Endothelial cell of umbilical vein (primary cell): ENCODE measurements at regions of chr17 and their contacts with region 1.

Region 1: GRCh38 chr17:51707205-51707604 is 446.9 kb downstream of the UTP18 start:
- DNase-seq: no peak
- H3K4me3 ChIP-seq: no peak overlapping the region
- H3K27ac ChIP-seq: no peak overlapping the region
- H3K4me1 ChIP-seq: no peaks in the 10 kb centered on the region
- H3K27me3 ChIP-seq: no peaks in the 10 kb centered on the region
- CTCF ChIP-seq: no peak
- POLR2A ChIP-seq: no peak

Region 2: DNA sequence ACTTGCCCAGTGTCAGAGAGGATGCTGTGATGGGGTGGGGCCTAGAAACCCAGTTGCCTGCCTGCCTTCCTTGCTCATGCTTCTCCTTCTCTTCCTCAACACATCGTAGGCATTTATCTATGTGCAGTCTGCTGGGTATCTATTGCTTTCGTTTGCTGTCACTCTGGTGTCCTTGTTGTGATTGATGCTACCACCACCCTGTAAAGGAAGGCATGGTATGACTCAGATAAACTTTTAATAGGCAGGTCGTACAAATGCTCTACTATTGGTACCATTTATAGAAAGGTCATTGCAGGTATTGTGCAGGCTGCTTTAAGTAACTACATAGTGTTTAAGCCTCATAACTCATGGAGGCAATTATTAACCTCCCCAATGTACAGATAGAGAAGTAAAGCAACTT is 78.0 kb before region 1 on chr17:
- CTCF ChIA-PET with region 1: no interaction called
- POLR2A ChIA-PET with region 1: no interaction called
- dilution Hi-C with region 1: no loop called
- intact Hi-C with region 1: loop called (anchors 2 kb)
- DNase-seq: no peak
- H3K4me3 ChIP-seq: no peak overlapping the region
- H3K27ac ChIP-seq: no peak overlapping the region
- H3K4me1 ChIP-seq: no peaks in the 10 kb centered on the region
- H3K27me3 ChIP-seq: no peaks in the 10 kb centered on the region
- CTCF ChIP-seq: no peak
- POLR2A ChIP-seq: no peak

Region 3: GRCh38 chr17:51748749-51749539 is 41.7 kb after region 1 on chr17:
- CTCF ChIA-PET with region 1: no interaction called
- POLR2A ChIA-PET with region 1: no interaction called
- dilution Hi-C with region 1: no loop called
- intact Hi-C with region 1: no loop called
- DNase-seq: no peak
- H3K4me3 ChIP-seq: no peak overlapping the region
- H3K27ac ChIP-seq: no peak overlapping the region
- H3K4me1 ChIP-seq: no peaks in the 10 kb centered on the region
- H3K27me3 ChIP-seq: no peaks in the 10 kb centered on the region
- CTCF ChIP-seq: no peak
- POLR2A ChIP-seq: no peak